Spleen (tissue), 13 donors: ENCODE measurements at regions of chr9 and their contacts with region 1.

Region 1: DNA sequence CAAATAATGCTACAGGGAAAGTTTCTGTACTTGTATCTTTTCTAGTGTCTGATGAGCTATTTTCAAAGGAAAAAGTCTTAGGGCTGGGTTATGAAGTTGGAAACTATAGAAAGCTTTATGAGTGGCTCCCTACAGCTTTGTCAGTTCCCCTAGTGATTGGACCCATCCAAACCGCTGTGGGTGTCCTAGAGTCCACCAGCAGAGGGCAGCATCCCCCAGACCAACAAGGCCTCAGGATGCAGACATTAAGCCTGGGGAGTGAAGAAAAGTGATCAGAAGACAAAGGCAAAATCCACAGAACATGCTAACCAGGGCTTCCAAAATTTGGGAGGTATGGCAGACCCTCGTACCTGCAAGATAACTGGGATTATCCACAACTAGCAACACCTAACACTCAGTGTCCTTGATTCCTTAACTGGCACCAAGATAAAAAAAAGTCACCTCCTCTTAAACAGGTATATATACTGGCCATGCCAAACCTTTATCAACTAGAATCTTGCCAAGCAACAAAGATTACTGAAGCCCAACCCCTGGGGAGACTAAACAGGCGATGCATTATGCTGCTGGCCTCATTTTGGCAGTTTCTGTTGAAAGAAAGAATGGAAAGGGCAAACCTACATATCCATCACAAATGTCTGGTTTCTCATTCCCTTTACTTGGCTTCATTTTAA is 110.4 kb upstream of the NR5A1 start:
- DNase-seq: peak; percentile 85
- H3K4me3 ChIP-seq: no peak overlapping the region
- H3K27ac ChIP-seq: no peak overlapping the region
- H3K4me1 ChIP-seq: no peaks in the 10 kb centered on the region
- H3K27me3 ChIP-seq: no peaks in the 10 kb centered on the region
- CTCF ChIP-seq: peak; percentile 40 to 89 (median 82)
- POLR2A ChIP-seq: no peak

Region 2: GRCh38 chr9:124513376-124513994 is 104.1 kb before region 1 on chr9:
- intact Hi-C with region 1: no loop called
- DNase-seq: no peak
- H3K4me3 ChIP-seq: no peak overlapping the region
- H3K27ac ChIP-seq: peak overlapping the region in 6 of 8 donors; percentile 15 to 80 (median 68)
- H3K4me1 ChIP-seq: peaks cover 9 to 37% (median 23%) of the 10 kb centered on the region in 6 donors
- H3K27me3 ChIP-seq: peaks cover 0 to 16% (median 0%) of the 10 kb centered on the region in 7 donors
- CTCF ChIP-seq: peak in 3 of 11 experiments; percentile 13 to 36 (median 23)
- POLR2A ChIP-seq: no peak

Region 3: DNA sequence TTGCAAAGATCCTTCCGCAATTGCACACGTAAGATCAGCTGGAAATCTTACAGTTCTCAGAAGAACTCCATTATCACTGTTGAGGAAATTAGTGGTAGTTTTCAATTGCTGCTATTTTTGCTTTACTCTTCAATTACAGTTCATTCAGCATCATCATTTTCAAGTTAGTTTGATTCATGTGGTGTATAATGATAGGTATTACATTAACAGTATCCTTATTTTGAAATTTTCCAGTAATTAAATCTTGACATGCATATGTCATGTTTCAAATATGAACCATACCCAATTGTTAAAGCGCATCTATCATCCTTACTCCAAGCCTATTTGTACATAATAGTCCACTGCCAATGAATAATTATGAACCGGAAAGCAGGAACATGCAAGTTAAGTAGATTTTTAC is 93.2 kb after region 1 on chr9:
- intact Hi-C with region 1: loop called (anchors 5 kb)
- DNase-seq: no peak
- H3K4me3 ChIP-seq: no peak overlapping the region
- H3K27ac ChIP-seq: no peak overlapping the region
- H3K4me1 ChIP-seq: peaks cover 0 to 9% (median 1%) of the 10 kb centered on the region in 6 donors
- H3K27me3 ChIP-seq: no peaks in the 10 kb centered on the region
- CTCF ChIP-seq: no peak
- POLR2A ChIP-seq: no peak